Heart left ventricle (tissue), 16 donors: ENCODE measurements at regions of chr11 and their contacts with region 1.

Region 1: GRCh38 chr11:30196400-30197206 is 34.2 kb upstream of the FSHB start:
- DNase-seq: peak; percentile 39 to 72 (median 42)
- ATAC-seq: peak in 3 of 4 donors; percentile 64 to 92 (median 85)
- H3K4me3 ChIP-seq: no peak overlapping the region
- H3K27ac ChIP-seq: no peak overlapping the region
- H3K4me1 ChIP-seq: no peaks in the 10 kb centered on the region
- H3K27me3 ChIP-seq: no peaks in the 10 kb centered on the region
- CTCF ChIP-seq: peak; percentile 59 to 81 (median 74)
- POLR2A ChIP-seq: no peak

Region 2: GRCh38 chr11:30143098-30143705 is 53.4 kb before region 1 on chr11:
- intact Hi-C with region 1: no loop called
- DNase-seq: no peak
- ATAC-seq: peak in 1 of 4 donors; percentile 15
- H3K4me3 ChIP-seq: no peak overlapping the region
- H3K27ac ChIP-seq: no peak overlapping the region
- H3K4me1 ChIP-seq: no peaks in the 10 kb centered on the region
- H3K27me3 ChIP-seq: no peaks in the 10 kb centered on the region
- CTCF ChIP-seq: peak; percentile 52 to 80 (median 70)
- POLR2A ChIP-seq: no peak

Region 3: GRCh38 chr11:30314625-30315024 is 118.0 kb after region 1 on chr11:
- intact Hi-C with region 1: loop called in 1 of 10 experiments (anchors 10 kb)
- DNase-seq: no peak
- ATAC-seq: no peak
- H3K4me3 ChIP-seq: no peak overlapping the region
- H3K27ac ChIP-seq: no peak overlapping the region
- H3K4me1 ChIP-seq: no peaks in the 10 kb centered on the region
- H3K27me3 ChIP-seq: peaks cover 0 to 7% (median 0%) of the 10 kb centered on the region in 9 donors
- CTCF ChIP-seq: peak; percentile 8 to 52 (median 33)
- POLR2A ChIP-seq: no peak